Caco-2 (cell line): ENCODE measurements at regions of chr6 and their contacts with region 1.

Region 1: GRCh38 chr6:24494821-24495795 is at the start of gene ALDH5A1:
- DNase-seq: peak; percentile 82 to 83
- H3K4me3 ChIP-seq: peak within 1 kb of the TSS; percentile 62
- H3K4me3 Mint-ChIP-seq: peak within 1 kb of the TSS; percentile 76
- H3K27ac Mint-ChIP-seq: peak within 1 kb of the TSS; percentile 77
- H3K4me1 ChIP-seq: no peaks in the 10 kb centered on the region; the same call in 1 of the 2 replicates
- H3K4me1 Mint-ChIP-seq: peaks cover 13% of the 10 kb centered on the region
- H3K27me3 ChIP-seq: no peaks in the 10 kb centered on the region
- H3K27me3 Mint-ChIP-seq: no peaks in the 10 kb centered on the region
- CTCF ChIP-seq: peak; percentile 27 to 59
- total RNA-seq, gene ALDH5A1: 42.4 and 45.3 TPM in 2 replicates

Region 2: GRCh38 chr6:24520929-24521546 is 25.9 kb after region 1 on chr6:
- CTCF ChIA-PET with region 1: interaction called, 60 read pairs
- POLR2A ChIA-PET with region 1: interaction called, 9 read pairs
- intact Hi-C with region 1: loop called (anchors 1 kb)
- DNase-seq: peak; percentile 70 to 79
- H3K4me3 ChIP-seq: no peak overlapping the region
- H3K4me3 Mint-ChIP-seq: no peak overlapping the region
- H3K27ac Mint-ChIP-seq: no peak overlapping the region
- H3K4me1 ChIP-seq: no peaks in the 10 kb centered on the region
- H3K4me1 Mint-ChIP-seq: peaks cover 12% of the 10 kb centered on the region
- H3K27me3 ChIP-seq: no peaks in the 10 kb centered on the region
- H3K27me3 Mint-ChIP-seq: no peaks in the 10 kb centered on the region
- CTCF ChIP-seq: peak; percentile 76 to 93

Region 3: DNA sequence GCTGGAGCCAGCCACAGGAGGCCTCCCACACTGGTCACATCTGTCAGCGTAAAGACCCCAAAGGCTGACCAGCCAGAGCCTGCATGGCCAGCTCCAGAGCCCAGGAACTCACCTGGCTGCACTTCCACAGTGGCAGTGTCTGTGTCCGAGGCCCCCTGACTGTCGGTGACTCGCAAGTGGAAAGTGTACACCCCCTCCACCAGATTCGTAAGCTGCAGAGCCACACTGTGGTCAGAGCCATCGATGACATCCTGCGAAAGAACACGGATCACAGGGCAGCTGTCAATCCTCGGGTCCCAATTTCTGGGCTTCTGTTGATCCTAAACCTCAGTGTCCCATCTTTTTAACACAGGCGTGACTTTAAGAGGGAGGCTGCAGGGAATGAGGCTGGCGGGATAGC is 69.0 kb after region 1 on chr6:
- CTCF ChIA-PET with region 1: interaction called, 4 read pairs
- POLR2A ChIA-PET with region 1: no interaction called
- intact Hi-C with region 1: loop called (anchors 2 kb)
- DNase-seq: peak in 1 of 2 experiments; percentile 32
- H3K4me3 ChIP-seq: no peak overlapping the region
- H3K4me3 Mint-ChIP-seq: no peak overlapping the region
- H3K27ac Mint-ChIP-seq: no peak overlapping the region
- H3K4me1 ChIP-seq: no peaks in the 10 kb centered on the region
- H3K4me1 Mint-ChIP-seq: no peaks in the 10 kb centered on the region
- H3K27me3 ChIP-seq: no peaks in the 10 kb centered on the region
- H3K27me3 Mint-ChIP-seq: peaks cover 7% of the 10 kb centered on the region
- CTCF ChIP-seq: no peak